ENCODE measurements at regions of chr6 and their contacts with region 1.

Region 1: DNA sequence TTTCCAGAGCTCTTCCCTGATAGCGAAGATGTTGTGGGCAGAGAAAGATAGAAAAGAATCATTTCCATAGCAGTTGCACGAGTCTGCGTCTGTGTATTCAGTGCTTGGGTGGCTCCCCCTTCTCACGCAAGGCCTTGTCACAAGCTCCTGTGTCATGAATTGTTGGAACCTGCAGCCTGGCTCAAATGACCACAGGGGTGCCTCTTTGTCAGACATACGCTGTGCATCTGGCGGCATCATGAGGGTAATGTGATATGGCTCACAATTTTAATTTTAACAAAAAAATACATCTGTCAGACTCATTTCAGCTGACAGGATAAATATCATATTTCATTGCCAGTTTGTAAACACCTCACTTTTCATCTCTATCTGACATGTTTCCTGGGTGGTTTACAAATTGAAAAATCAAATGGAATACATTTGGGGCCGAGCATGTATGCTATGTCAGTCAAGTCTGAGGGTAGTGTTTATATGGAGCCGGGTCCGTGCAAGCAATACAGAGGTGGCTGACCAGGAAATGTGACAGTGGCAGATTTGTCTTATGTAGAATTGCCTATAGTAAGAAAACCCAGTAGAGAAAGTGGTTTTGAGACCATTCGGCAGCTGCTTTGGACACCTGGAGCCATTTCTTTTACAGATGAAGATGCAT is 90.9 kb downstream of the CAP2 start:
- DNase-seq: no peak

Region 2: GRCh38 chr6:17289630-17290061 is 194.7 kb before region 1 on chr6:
- intact Hi-C with region 1: loop called (anchors 5 kb)
- DNase-seq: no peak

Region 3: DNA sequence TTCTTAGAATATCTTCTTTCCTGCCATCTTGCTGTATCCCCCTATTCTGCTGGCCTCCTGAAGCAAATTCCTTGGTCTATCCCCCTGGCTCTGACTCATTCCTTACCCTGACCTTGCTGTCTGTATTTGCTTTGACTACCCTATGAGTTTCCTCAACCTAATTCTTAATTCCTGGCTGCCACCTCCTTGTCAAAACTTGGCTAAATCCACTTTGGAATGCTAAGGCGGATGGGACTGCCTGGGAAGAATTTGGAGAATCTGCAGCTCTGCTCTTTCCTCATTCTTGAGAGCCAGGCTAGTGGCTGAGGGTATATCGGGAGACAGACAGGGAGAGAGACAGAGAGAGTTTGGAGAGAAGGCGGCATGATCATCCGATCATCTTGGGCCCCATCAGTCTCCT is 66.5 kb before region 1 on chr6:
- intact Hi-C with region 1: no loop called
- DNase-seq: no peak